ENCODE measurements at regions of chr11 and their contacts with region 1.

Region 1: DNA sequence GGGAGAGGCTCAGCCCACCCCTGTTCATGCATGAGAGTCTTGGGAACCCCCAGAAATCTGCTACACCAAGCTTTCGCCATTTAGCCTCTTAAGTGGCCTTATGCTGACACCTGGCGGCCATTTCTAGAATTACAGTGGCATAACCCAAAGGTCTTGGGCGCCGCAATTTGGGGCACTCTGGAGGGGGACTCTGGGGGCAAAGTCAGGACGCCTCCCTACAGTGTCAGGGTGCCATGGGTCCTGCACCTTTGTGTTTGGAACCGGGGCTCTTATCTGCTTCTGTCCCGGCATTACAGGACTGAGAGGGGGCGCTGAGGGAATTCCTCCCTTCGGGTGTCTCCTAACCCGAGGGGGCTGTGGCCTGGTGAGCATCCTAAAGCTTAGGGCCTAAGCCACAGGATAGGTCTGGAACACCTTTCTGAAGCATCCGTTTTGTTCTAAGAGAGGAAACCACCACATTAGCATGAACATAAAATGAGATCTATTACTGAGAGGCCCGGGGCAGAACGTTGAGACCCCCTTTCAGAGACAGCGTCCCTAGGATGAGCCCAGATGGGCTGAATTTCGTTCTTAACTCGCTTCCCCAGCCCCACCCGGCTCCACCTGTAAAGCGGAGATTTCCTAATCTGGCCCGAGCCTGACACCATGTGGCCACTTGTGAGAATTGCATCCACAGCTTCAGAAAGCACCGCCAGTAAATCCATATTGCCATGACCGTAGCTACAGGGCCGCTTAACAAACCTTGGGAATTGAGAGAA is 9.3 kb downstream of the INS start:
- DNase-seq: peak in 1 of 2 experiments; percentile 91
- H3K4me3 ChIP-seq: peak overlapping the region in 1 of 4 experiments; percentile 33; a peak in 2 of 8 replicates
- H3K27ac ChIP-seq: no peak overlapping the region
- H3K4me1 ChIP-seq: peaks cover 0 to 3% (median 2%) of the 10 kb centered on the region in 4 experiments; a peak in 4 of 7 replicates
- H3K27me3 ChIP-seq: peaks cover 17 to 35% (median 31%) of the 10 kb centered on the region in 4 experiments
- CTCF ChIP-seq: peak; percentile 66 to 84 (median 84)
- EP300 ChIP-seq: no peak
- POLR2A ChIP-seq: no peak
- RAD21 ChIP-seq: peak; percentile 86 to 87

Region 2: DNA sequence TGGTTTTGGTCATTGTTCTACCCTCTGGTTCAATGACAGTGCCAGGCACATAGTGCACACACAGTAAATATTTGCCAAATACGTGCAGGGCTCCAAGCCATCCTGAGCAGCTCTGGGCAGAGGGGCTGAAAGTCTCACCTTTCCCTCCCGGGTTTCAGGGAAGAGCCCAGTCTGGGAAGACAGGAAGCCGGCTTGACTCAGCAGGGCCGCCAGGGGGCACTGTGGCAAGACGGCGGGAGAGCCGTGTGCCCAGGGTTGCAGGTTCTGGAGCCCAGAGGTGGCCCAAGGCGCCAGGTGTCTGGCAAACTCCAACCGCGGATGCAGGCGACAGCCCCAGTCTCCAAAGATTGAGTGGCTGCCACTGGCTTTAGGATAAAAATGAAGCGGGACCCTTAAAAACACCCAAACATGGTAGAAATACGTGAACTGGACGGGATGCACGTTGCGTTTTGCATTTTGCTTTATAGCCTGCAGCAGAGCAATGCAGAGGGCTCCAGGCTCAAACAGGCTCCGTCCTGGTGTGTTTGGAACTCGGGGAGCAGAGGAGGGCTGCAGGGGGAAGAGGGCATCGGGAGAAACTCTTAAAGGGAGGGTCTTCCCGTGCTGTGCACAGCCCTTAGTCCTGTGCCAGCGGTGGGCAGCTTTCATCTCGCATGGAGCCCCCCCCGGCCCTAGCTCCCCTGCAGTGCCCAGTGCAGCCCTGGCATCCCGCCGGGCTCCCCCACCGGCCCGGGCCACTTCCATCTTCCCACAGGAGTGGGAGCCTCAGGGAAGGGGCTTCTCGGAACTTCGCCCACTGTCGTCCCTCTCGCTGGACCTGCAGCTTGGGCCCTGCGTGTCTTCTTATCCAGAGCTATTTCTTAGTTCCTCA is 511.4 kb before region 1 on chr11:
- CTCF ChIA-PET with region 1: interaction called, 18 read pairs
- POLR2A ChIA-PET with region 1: no interaction called
- DNase-seq: peak; percentile 58 to 87
- H3K4me3 ChIP-seq: no peak overlapping the region
- H3K27ac ChIP-seq: no peak overlapping the region
- H3K4me1 ChIP-seq: no peaks in the 10 kb centered on the region; a peak in 1 of 7 replicates
- H3K27me3 ChIP-seq: no peaks in the 10 kb centered on the region; a peak in 1 of 7 replicates
- CTCF ChIP-seq: peak; percentile 86 to 92 (median 89)
- EP300 ChIP-seq: no peak
- POLR2A ChIP-seq: no peak
- RAD21 ChIP-seq: peak; percentile 42 to 60; a peak in 3 of 4 replicates

Region 3: DNA sequence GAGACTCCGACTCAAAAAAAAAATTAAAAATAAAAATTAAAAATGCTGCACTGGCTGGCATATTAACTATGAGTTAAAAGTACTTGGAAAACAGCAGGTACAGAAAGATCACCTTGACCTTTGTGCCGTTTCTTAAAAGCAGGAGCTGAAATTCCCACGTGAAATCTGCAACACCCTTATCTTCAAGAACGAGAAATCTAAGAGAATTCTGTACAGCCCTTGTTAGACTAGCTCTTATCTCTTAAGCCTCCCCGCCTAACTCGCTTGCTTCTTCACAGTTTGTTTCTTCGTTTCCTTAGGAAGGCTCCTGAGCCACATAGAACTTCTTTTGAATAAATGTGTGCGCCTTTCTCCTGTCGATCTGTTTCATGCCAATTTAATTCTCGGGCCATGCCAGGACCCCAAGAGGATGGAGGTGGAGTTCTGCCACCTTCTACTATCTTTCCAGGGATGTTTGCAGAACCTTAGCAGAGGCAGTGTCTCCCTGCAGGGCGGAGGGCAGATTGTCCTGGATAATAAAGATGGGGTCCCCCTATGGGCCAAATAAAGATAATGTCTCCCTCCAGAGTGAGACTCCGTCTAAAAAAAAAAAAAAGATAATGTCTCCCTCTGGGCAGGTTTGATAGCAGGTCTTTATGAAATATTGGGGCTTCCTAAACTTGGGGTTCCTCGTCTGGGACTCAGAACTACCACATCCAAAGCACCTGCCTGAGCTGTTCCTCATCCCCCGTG is 344.2 kb before region 1 on chr11:
- CTCF ChIA-PET with region 1: interaction called, 12 read pairs
- POLR2A ChIA-PET with region 1: no interaction called
- DNase-seq: no peak
- H3K4me3 ChIP-seq: no peak overlapping the region
- H3K27ac ChIP-seq: no peak overlapping the region
- H3K4me1 ChIP-seq: 0 out of 7 replicates have a peak, but pooled peaks cover 0 to 3% (median 0%) of the 10 kb centered on the region in 4 experiments
- H3K27me3 ChIP-seq: peaks cover 0 to 2% (median 1%) of the 10 kb centered on the region in 4 experiments; a peak in 2 of 7 replicates
- CTCF ChIP-seq: peak in 2 of 3 experiments; percentile 29 to 41; a peak in 3 of 4 replicates
- EP300 ChIP-seq: no peak
- POLR2A ChIP-seq: no peak
- RAD21 ChIP-seq: peak; percentile 6 to 28; a peak in 1 of 4 replicates

Region 4: DNA sequence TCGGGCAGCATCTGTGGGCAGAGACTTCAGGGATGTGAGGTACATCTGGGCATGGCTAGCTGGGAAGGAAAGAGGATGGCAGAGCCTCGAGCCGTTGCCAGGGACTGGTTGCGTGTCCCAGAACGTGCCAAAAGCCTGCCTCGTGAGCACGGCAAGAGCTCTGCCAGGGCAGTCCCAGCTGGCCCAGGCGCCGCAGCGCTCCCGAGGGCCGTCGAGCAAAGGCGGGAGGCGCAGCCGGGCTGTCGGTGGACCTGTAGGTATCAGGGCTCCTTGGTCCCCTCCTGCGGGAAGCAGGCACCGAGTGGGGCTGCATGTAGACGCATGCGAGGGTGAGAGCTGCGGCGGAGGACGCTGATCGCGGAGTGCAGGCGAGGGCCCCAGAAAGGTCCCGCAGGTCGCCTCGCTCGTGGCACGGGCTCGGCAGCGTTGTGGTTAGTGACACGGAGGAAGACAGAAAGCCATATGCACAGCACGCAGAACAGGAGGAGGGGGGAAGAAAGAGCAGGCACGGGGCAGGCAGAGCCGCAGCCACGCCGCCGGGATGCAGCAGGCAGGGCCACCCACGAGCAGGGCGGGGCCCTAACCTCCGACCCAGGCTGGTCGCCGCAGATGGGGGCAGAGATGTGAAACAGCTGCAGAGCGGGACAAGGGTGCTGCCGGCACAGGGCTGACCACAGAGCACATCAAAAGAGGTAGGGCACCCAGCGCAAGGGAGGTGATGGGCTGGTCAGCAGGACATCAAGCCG is 280.8 kb before region 1 on chr11:
- CTCF ChIA-PET with region 1: interaction called, 156 read pairs
- POLR2A ChIA-PET with region 1: no interaction called
- DNase-seq: no peak
- H3K4me3 ChIP-seq: no peak overlapping the region
- H3K27ac ChIP-seq: no peak overlapping the region
- H3K4me1 ChIP-seq: no peaks in the 10 kb centered on the region
- H3K27me3 ChIP-seq: peaks cover 0 to 3% (median 0%) of the 10 kb centered on the region in 4 experiments; a peak in 1 of 7 replicates
- CTCF ChIP-seq: no peak
- EP300 ChIP-seq: no peak
- POLR2A ChIP-seq: no peak
- RAD21 ChIP-seq: no peak

Region 5: GRCh38 chr11:1908618-1909017 is 243.1 kb before region 1 on chr11:
- CTCF ChIA-PET with region 1: interaction called, 28 read pairs
- POLR2A ChIA-PET with region 1: interaction called, 4 read pairs
- DNase-seq: no peak
- H3K4me3 ChIP-seq: no peak overlapping the region
- H3K27ac ChIP-seq: no peak overlapping the region
- H3K4me1 ChIP-seq: peaks cover 2 to 10% (median 6%) of the 10 kb centered on the region in 4 experiments; a peak in 6 of 7 replicates
- H3K27me3 ChIP-seq: peaks cover 0 to 3% (median 2%) of the 10 kb centered on the region in 4 experiments; a peak in 1 of 7 replicates
- CTCF ChIP-seq: no peak
- EP300 ChIP-seq: no peak
- POLR2A ChIP-seq: no peak
- RAD21 ChIP-seq: no peak

Region 6: DNA sequence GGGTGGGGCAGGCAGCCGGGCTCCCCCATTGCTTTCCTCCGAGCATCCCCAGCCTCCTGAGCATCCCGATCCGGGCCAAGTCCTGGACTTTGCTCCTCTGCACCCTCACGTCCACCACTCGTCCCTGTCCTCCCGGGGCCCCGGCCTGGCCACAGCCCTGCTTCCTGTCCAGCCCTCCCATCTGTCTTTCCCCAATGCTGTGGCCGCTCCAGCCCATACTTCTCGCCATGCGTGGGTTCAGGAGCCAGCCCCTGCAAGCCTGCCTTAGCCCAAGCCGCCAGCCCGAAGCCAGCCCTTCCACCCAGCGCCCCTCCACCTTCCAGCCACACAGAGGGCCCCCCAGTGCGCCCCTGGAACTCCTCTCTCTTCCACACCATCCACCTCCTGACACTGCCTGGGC is 180.7 kb before region 1 on chr11:
- CTCF ChIA-PET with region 1: interaction called, 100 read pairs
- POLR2A ChIA-PET with region 1: no interaction called
- DNase-seq: no peak
- H3K4me3 ChIP-seq: no peak overlapping the region
- H3K27ac ChIP-seq: no peak overlapping the region
- H3K4me1 ChIP-seq: no peaks in the 10 kb centered on the region
- H3K27me3 ChIP-seq: no peaks in the 10 kb centered on the region
- CTCF ChIP-seq: no peak
- EP300 ChIP-seq: no peak
- POLR2A ChIP-seq: no peak
- RAD21 ChIP-seq: no peak

Region 7: GRCh38 chr11:2074266-2074825 is 77.3 kb before region 1 on chr11:
- CTCF ChIA-PET with region 1: interaction called, 21 read pairs
- POLR2A ChIA-PET with region 1: no interaction called
- DNase-seq: peak in 1 of 2 experiments; percentile 75
- H3K4me3 ChIP-seq: no peak overlapping the region
- H3K27ac ChIP-seq: no peak overlapping the region
- H3K4me1 ChIP-seq: no peaks in the 10 kb centered on the region
- H3K27me3 ChIP-seq: peaks cover 0 to 7% (median 4%) of the 10 kb centered on the region in 4 experiments; a peak in 3 of 7 replicates
- CTCF ChIP-seq: peak; percentile 63 to 85 (median 71)
- EP300 ChIP-seq: no peak
- POLR2A ChIP-seq: no peak
- RAD21 ChIP-seq: peak; percentile 38 to 54

Region 8: GRCh38 chr11:2214527-2215229 is 63.0 kb after region 1 on chr11:
- CTCF ChIA-PET with region 1: no interaction called
- POLR2A ChIA-PET with region 1: no interaction called
- DNase-seq: no peak
- H3K4me3 ChIP-seq: no peak overlapping the region
- H3K27ac ChIP-seq: no peak overlapping the region
- H3K4me1 ChIP-seq: peaks cover 5 to 14% (median 12%) of the 10 kb centered on the region in 4 experiments
- H3K27me3 ChIP-seq: peaks cover 0 to 27% (median 6%) of the 10 kb centered on the region in 4 experiments; a peak in 4 of 7 replicates
- CTCF ChIP-seq: no peak
- EP300 ChIP-seq: no peak
- POLR2A ChIP-seq: no peak
- RAD21 ChIP-seq: no peak

Measured in H1 (cell line).